ENCODE measurements at regions of chr4 and their contacts with region 1.

Region 1: DNA sequence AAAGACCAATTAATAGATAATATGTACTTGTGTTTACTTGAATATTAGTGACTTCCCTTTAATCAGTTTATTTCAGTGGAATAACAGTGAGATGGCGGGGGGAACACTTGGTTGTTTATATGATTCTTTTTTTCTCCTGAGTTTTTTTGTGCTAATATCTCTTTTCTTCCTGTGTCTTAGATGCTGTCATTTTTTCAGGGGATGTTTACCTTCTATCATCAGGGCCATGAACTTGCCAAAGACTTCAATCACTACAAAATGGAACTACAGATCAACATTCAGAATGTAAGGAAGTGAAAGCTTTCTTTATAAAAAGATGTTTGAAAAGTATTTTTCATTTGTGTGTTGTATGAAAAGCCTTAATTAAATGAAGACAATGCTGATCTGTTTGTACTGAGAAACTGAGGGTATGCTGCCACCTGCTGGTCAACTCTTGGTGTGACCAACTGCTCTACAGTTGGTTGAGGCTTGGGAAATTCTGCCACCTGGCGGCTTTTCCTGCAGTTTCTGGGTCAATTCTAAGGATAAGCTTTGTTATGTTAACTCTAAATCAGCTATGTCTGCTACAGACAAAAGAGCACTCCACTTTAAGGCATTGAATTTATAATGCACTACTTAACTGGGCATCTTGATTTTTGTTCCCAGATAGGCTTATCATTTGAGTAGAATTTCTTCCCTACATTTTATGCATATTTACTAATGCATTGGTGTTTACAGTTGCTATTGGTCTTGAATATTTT is 134.8 kb downstream of the ARHGAP10 start:
- DNase-seq: peak; percentile 93 to 95
- H3K4me3 ChIP-seq: no peak overlapping the region
- H3K27ac ChIP-seq: peak overlapping the region; percentile 46 to 75
- H3K4me1 ChIP-seq: peaks cover 0 to 49% (median 32%) of the 10 kb centered on the region in 4 donors
- H3K27me3 ChIP-seq: no peaks in the 10 kb centered on the region
- CTCF ChIP-seq: peak; percentile 98 to 100

Region 2: DNA sequence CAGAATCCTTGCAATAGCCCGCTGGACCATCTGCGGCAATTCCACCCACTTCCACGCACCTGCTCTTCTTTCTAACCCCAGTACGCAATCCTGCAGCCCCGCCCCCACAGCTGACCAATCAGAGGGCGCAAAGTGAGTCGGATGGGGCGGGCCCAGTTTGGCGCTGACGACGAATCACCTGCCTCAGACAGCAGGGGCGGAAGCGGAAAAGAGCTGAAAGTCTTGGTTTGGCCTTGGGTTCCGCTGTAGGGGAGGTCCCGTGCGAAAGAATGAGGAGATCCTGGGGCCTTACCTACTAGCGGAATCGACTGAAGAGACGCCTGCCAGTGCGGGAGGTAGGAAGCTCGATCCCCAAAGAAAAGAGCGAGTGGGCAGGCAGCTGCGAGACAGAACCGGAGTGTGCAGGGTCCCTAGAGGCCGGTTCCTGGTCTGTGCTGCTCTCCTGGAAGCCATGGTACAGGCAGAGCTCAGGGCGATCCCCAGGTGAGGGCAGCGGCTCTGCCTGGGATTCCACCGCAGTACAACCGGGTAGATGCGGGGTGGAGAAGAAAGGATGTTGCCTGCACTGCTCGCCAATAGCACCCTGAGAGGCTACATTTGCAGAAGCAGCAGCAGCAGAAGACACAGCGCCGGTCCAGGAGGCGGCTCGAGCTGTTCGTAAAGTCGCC is 249.4 kb before region 1 on chr4 and contains the start of gene TMEM184C:
- intact Hi-C with region 1: loop called (anchors 10 kb)
- DNase-seq: peak; percentile 99
- H3K4me3 ChIP-seq: peak within 1 kb of the TSS; percentile 71
- H3K27ac ChIP-seq: peak within 1 kb of the TSS; percentile 77 to 79
- H3K4me1 ChIP-seq: peaks cover 0 to 48% (median 27%) of the 10 kb centered on the region in 4 donors
- H3K27me3 ChIP-seq: no peaks in the 10 kb centered on the region
- CTCF ChIP-seq: no peak

Region 3: GRCh38 chr4:147707865-147708672 is 158.6 kb before region 1 on chr4:
- intact Hi-C with region 1: loop called (anchors 2 kb)
- DNase-seq: peak in 1 of 2 donors; percentile 66
- H3K4me3 ChIP-seq: no peak overlapping the region
- H3K27ac ChIP-seq: no peak overlapping the region
- H3K4me1 ChIP-seq: peaks cover 0 to 8% (median 0%) of the 10 kb centered on the region in 4 donors
- H3K27me3 ChIP-seq: no peaks in the 10 kb centered on the region
- CTCF ChIP-seq: peak; percentile 84 to 91

Region 4: DNA sequence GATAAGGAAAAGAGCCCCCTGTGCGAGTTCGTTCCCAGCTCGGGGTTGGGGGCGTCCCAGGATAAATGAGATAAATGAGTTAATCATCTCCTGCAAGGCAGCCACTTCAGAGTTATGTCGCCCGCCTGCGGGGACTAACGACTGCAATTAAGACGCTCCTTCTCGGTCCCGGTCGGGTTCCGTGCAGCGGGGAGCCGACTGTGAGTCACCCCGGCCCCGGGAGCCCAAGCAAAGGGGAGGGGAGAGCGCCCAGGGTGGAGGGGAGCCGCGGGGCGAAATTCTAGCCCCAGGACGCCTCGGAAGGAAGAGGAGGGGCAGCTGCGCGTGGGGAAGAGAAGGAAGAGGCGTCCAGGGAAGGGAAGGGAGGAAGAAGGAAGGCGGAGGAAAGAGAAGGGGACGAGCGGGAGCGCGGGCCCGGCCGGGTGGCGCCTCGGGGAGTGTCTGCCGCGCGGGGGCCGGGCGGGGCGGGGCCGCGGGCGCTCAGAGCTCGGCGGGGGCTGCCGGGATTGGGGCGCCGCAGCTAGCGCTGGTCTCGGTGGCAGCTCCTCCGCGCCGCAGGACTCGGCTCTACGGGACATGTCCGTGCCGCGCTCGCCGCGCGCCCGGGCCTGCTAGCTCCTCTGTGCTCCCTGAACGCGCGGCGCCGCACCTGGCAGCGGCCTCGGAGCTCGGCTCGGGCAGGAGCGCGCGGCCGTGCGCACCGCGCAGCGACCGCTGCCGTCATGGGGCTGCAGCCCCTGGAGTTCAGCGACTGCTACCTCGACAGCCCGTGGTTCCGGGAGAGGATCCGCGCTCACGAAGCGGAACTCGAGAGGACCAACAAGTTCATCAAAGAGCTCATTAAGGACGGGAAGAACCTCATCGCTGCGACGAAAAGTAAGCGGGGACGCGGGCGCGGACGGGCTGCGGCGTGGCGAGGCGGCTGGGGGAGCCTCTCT is 134.9 kb before region 1 on chr4 and contains the start of gene ARHGAP10:
- intact Hi-C with region 1: loop called (anchors 5 kb)
- DNase-seq: peak; percentile 75 to 88
- H3K4me3 ChIP-seq: peak within 1 kb of the TSS; percentile 82 to 91
- H3K27ac ChIP-seq: peak within 1 kb of the TSS; percentile 89 to 96
- H3K4me1 ChIP-seq: peaks cover 0 to 33% (median 14%) of the 10 kb centered on the region in 4 donors
- H3K27me3 ChIP-seq: no peaks in the 10 kb centered on the region
- CTCF ChIP-seq: no peak

Measured in tibial artery (tissue), 4 donors.